Mucosa of descending colon (tissue), 3 donors: ENCODE measurements at regions of chr10 and their contacts with region 1.

Region 1: DNA sequence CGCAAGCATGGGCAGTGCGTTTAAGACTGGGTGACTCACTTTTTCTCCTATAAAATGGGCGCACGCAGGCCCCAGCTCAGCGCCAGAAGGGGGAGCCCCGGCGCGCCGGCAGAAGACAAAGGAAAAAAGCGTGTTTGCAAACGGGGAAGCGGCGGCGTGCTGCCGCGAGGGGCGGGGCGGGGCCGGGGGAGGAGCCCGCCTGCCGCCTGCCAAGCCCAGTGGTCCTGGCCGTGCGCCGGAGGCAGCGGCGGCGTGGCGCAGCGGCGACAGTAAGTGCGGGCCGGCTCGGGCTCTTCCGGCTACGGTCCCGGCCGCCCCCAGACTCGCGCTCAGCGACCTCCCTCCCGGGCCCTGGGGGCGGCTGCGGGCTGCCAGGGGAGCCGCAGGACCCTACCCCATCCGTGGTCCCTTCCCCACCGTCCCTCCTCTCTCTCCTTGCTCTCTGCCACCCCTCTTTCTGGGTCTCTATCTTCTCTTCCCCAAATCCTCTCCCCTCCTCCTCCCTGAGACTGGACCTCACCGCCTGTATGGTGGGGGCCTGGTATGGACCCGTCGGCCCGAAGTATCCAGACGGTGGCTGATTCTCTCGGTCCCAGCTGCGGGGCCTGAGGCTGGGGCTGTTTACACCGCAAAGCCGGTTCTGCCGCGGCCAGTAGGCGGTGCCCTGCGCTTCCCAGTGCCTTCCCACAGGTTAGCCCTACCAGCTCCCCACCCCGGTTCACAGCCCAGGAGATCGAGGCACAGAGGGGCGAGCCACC is at the start of gene SLC29A3:
- DNase-seq: peak; percentile 87 to 89 (median 87)
- ATAC-seq: peak; percentile 94
- H3K4me3 ChIP-seq: peak within 1 kb of the TSS; percentile 35
- H3K4me1 ChIP-seq: peaks cover 9% of the 10 kb centered on the region
- CTCF ChIP-seq: peak; percentile 47
- total RNA-seq, gene SLC29A3: 6.0 to 6.4 (median 6.3) TPM

Region 2: GRCh38 chr10:70815504-70816219 is 503.6 kb before region 1 on chr10 and contains the start of gene SGPL1:
- intact Hi-C with region 1: no loop called
- DNase-seq: peak; percentile 87 to 94 (median 92)
- ATAC-seq: peak; percentile 99
- H3K4me3 ChIP-seq: peak within 1 kb of the TSS; percentile 59
- H3K4me1 ChIP-seq: peaks cover 8% of the 10 kb centered on the region
- CTCF ChIP-seq: peak; percentile 98
- total RNA-seq, gene SGPL1: 50.5 to 67.2 (median 55.5) TPM

Region 3: GRCh38 chr10:71569775-71570588 is 250.8 kb after region 1 on chr10:
- intact Hi-C with region 1: loop called in 1 of 2 experiments (anchors 10 kb)
- DNase-seq: peak in 2 of 3 donors; percentile 70 to 87
- ATAC-seq: peak; percentile 70
- H3K4me3 ChIP-seq: no peak overlapping the region
- H3K4me1 ChIP-seq: no peaks in the 10 kb centered on the region
- CTCF ChIP-seq: peak; percentile 58

Region 4: GRCh38 chr10:71608819-71609768 is 289.9 kb after region 1 on chr10:
- intact Hi-C with region 1: loop called in 1 of 2 experiments (anchors 10 kb)
- DNase-seq: peak; percentile 73 to 93 (median 84)
- ATAC-seq: peak; percentile 37
- H3K4me3 ChIP-seq: no peak overlapping the region
- H3K4me1 ChIP-seq: peaks cover 7% of the 10 kb centered on the region
- CTCF ChIP-seq: peak; percentile 63

Region 5: GRCh38 chr10:71708301-71708703 is 389.1 kb after region 1 on chr10:
- intact Hi-C with region 1: loop called (anchors 10 kb)
- DNase-seq: peak in 2 of 3 donors; percentile 73 to 77
- ATAC-seq: peak; percentile 66
- H3K4me3 ChIP-seq: no peak overlapping the region
- H3K4me1 ChIP-seq: peaks cover 6% of the 10 kb centered on the region
- CTCF ChIP-seq: peak; percentile 80